Activated CD8-positive, alpha-beta T cell treated with anti-CD3 and anti-CD28 coated beads, Interleukin-2, amount 10 ng/mL, durations not matched to agents 7 days and 5 days (primary cell): ENCODE measurements at regions of chr19 and their contacts with region 1.

Region 1: GRCh38 chr19:43438291-43439096 is 23.8 kb downstream of the TEX101 start:
- DNase-seq: no peak
- ATAC-seq: no peak
- H3K4me3 Mint-ChIP-seq: peak overlapping the region; percentile 22
- H3K27ac Mint-ChIP-seq: peak overlapping the region; percentile 86
- H3K4me1 Mint-ChIP-seq: peaks cover 35% of the 10 kb centered on the region
- H3K27me3 Mint-ChIP-seq: no peaks in the 10 kb centered on the region

Region 2: DNA sequence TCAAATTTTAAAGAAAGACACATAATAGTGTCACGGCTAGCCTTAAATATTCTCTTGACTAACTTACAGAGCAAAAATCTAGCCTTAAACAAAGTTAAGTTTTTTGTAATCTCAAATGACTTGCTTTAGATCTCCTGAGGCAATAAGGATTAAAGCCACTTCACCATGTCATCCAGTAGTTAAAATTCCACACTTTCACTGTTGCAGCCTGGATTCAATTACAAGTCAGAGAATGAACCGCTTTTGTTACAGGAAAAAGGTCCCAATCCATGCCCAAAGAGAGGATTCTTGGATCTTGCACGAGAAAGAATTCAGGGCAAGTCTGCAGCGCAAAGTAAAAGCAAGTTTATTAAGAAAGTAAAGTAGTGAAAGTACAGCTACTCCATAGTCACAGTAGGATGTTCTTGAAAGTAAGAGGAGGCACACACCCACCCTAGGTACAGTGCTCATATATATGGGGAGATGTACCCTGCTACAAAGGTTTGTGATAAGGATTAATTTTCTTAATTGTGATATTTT is 119.6 kb before region 1 on chr19:
- CTCF ChIA-PET with region 1: no interaction called
- POLR2A ChIA-PET with region 1: no interaction called
- DNase-seq: no peak
- ATAC-seq: no peak
- H3K4me3 Mint-ChIP-seq: no peak overlapping the region
- H3K27ac Mint-ChIP-seq: no peak overlapping the region
- H3K4me1 Mint-ChIP-seq: no peaks in the 10 kb centered on the region
- H3K27me3 Mint-ChIP-seq: peaks cover 6% of the 10 kb centered on the region

Region 3: GRCh38 chr19:43425567-43426392 is 12.7 kb before region 1 on chr19:
- CTCF ChIA-PET with region 1: interaction called, 45 read pairs
- POLR2A ChIA-PET with region 1: no interaction called
- DNase-seq: no peak
- ATAC-seq: no peak
- H3K4me3 Mint-ChIP-seq: no peak overlapping the region
- H3K27ac Mint-ChIP-seq: no peak overlapping the region
- H3K4me1 Mint-ChIP-seq: peaks cover 4% of the 10 kb centered on the region
- H3K27me3 Mint-ChIP-seq: peaks cover 2% of the 10 kb centered on the region

Region 4: GRCh38 chr19:43495082-43495481 is 56.6 kb after region 1 on chr19:
- CTCF ChIA-PET with region 1: no interaction called
- POLR2A ChIA-PET with region 1: no interaction called
- DNase-seq: no peak
- ATAC-seq: no peak
- H3K4me3 Mint-ChIP-seq: no peak overlapping the region
- H3K27ac Mint-ChIP-seq: no peak overlapping the region
- H3K4me1 Mint-ChIP-seq: no peaks in the 10 kb centered on the region
- H3K27me3 Mint-ChIP-seq: no peaks in the 10 kb centered on the region

Region 5: GRCh38 chr19:43526884-43527859 is 88.7 kb after region 1 on chr19 and contains the start of gene ETHE1:
- CTCF ChIA-PET with region 1: interaction called, 387 read pairs
- POLR2A ChIA-PET with region 1: interaction called, 7 read pairs
- DNase-seq: peak; percentile 83
- ATAC-seq: peak; percentile 92
- H3K4me3 Mint-ChIP-seq: peak within 1 kb of the TSS; percentile 95
- H3K27ac Mint-ChIP-seq: peak within 1 kb of the TSS; percentile 68
- H3K4me1 Mint-ChIP-seq: peaks cover 29% of the 10 kb centered on the region
- H3K27me3 Mint-ChIP-seq: no peaks in the 10 kb centered on the region
- total RNA-seq, gene ETHE1: 67.9 to 69.1 TPM